Caco-2 (cell line): ENCODE measurements at regions of chr1 and their contacts with region 1.

Region 1: DNA sequence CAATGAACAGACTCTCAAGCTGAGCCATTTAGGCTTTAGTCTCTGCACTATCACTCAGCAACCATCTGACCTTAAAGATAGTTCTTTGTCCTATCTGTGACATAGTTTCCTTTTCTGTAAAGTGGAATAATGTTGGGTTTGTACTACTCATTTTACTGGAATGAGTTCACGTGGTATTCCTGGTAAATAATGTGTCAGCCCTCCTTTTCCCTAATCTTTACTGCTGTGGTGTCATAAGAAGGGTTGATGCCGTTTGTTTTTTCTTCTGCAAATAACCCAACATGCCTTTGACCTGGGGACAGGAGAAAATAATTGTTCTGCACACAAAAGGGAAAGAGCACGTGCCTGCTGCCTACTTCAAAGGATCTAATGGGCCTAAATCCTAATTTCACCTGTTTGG is 297.8 kb downstream of the BRINP3 start:
- DNase-seq: peak; percentile 46 to 57
- H3K4me3 ChIP-seq: no peak overlapping the region
- H3K4me3 Mint-ChIP-seq: no peak overlapping the region
- H3K27ac Mint-ChIP-seq: no peak overlapping the region
- H3K4me1 ChIP-seq: peaks cover 12% of the 10 kb centered on the region
- H3K4me1 Mint-ChIP-seq: peaks cover 6% of the 10 kb centered on the region
- H3K27me3 ChIP-seq: no peaks in the 10 kb centered on the region
- H3K27me3 Mint-ChIP-seq: no peaks in the 10 kb centered on the region
- CTCF ChIP-seq: no peak

Region 2: DNA sequence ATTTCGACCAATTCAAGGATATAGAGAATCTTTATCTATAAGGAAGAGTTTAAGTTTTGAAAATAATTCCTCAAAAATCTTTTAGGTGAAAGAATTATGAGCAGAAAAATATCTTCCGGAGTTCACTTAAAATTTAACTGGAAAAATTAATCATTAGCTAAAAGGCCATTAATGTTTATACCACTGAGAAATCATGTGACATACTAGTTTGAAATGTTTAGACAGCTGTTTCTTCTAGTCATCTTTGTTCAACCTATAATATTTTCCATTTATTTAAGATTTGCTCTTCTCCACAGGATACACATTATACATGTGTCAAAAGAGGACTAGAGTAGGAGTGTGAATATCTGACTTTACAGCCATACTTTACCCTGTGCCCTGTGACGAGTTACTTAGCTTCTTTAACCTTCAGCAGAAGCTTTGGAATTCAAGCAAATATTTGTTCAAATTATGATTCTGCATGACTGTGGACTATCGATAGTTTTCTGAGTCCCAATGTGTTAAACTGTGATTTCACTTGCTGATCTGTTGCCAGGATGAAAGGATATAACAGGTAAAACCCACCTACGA is 77.0 kb before region 1 on chr1:
- CTCF ChIA-PET with region 1: no interaction called
- POLR2A ChIA-PET with region 1: no interaction called
- intact Hi-C with region 1: loop called (anchors 1 kb)
- DNase-seq: peak in 1 of 2 experiments; percentile 33
- H3K4me3 ChIP-seq: no peak overlapping the region
- H3K4me3 Mint-ChIP-seq: peak overlapping the region; percentile 63
- H3K27ac Mint-ChIP-seq: peak overlapping the region; percentile 89
- H3K4me1 ChIP-seq: peaks cover 33% of the 10 kb centered on the region
- H3K4me1 Mint-ChIP-seq: peaks cover 6% of the 10 kb centered on the region
- H3K27me3 ChIP-seq: no peaks in the 10 kb centered on the region
- H3K27me3 Mint-ChIP-seq: no peaks in the 10 kb centered on the region
- CTCF ChIP-seq: no peak